ENCODE measurements at regions of chr20 and their contacts with region 1.

Region 1: GRCh38 chr20:47576516-47577033 is 74.9 kb downstream of the NCOA3 start:
- DNase-seq: peak in 4 of 10 donors; percentile 11 to 81 (median 14)

Region 2: DNA sequence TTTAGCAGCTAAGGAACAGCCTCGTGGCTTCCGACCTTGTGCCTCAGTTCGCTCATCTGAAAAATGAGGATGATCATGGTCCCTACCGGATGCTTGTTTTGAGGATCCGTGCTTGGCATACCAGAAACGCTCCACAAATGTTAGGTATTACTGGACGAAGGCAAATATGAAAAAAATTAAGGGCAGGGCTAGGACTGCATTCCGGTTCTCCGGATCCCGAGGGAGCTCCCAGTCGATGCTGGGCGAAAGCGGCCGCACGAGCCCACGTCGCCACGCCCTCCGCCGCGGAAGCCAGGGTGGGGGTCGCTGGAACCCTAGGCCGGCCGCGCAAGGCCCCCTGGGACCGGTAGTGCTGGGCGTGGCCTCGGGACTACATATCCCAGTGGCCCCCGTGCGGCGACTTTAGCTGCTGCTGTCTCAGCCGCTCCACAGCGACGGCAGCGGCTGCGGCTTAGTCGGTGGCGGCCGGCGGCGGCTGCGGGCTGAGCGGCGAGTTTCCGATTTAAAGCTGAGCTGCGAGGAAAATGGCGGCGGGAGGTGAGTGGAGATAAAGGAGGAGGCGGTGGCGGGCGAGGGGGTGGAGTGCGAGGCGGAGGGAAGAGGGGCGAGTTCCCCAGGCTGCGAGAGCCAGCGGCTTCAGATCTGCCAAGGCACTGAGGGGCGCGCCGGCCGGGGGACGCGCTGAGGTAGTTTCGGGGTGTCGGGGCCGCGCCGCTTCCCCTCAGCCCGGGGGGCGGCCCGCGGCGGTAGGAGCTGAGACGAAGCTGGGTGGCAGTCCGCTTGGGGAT is 74.9 kb before region 1 on chr20 and contains the start of gene NCOA3:
- intact Hi-C with region 1: loop called (anchors 2 kb)
- DNase-seq: peak; percentile 91 to 99 (median 95)

Region 3: DNA sequence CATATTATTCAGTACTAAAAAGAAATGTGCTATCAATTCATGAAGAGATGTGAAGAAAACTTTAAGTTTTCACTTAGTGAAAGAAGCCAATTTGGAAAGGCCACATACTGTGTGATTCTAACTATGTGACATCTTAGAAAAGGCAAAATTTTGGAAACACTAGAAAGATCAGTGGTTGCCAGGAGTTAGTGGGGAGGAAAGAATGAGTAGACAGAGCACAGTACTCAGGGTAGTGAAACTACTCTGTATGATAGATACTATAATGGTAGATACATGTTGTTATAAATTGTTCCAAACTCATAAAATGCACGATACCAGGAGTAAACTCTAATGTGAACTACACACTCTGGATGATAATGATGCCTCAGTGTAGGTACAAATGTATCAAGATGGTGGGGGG is 60.7 kb before region 1 on chr20:
- intact Hi-C with region 1: no loop called
- DNase-seq: no peak

Measured in posterior cingulate gyrus (tissue), 11 donors.